Esophagus squamous epithelium (tissue), 5 donors: ENCODE measurements at regions of chr17 and their contacts with region 1.

Region 1: DNA sequence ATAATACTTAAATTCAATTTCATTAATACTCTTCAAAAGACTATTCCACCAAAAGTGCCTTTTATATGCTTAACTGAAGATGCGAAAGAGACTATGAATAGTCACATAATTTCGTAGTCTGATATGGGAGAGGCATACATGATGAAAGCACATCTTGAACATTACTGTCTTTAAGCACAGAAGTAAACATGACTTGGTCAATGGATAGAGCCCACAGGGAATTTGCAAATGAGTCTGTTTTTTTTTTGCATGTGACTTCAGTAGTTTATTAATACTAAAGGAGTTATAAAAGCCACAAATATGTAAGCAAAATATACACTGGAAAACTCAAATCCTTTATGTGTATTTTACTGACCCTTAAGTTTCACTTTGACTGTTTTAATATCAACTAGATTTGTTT is 15.9 kb downstream of the ADPRM start:
- DNase-seq: no peak
- H3K4me3 ChIP-seq: no peak overlapping the region
- H3K27ac ChIP-seq: no peak overlapping the region
- H3K4me1 ChIP-seq: no peaks in the 10 kb centered on the region
- H3K27me3 ChIP-seq: no peaks in the 10 kb centered on the region
- CTCF ChIP-seq: no peak
- POLR2A ChIP-seq: no peak

Region 2: GRCh38 chr17:10836966-10837590 is 123.8 kb after region 1 on chr17:
- intact Hi-C with region 1: no loop called
- DNase-seq: no peak
- H3K4me3 ChIP-seq: no peak overlapping the region
- H3K27ac ChIP-seq: no peak overlapping the region
- H3K4me1 ChIP-seq: no peaks in the 10 kb centered on the region
- H3K27me3 ChIP-seq: peaks cover 0 to 4% (median 0%) of the 10 kb centered on the region in 4 donors
- CTCF ChIP-seq: no peak
- POLR2A ChIP-seq: no peak

Region 3: GRCh38 chr17:11296994-11297393 is 583.7 kb after region 1 on chr17:
- intact Hi-C with region 1: loop called (anchors 5 kb)
- DNase-seq: no peak
- H3K4me3 ChIP-seq: no peak overlapping the region
- H3K27ac ChIP-seq: no peak overlapping the region
- H3K4me1 ChIP-seq: no peaks in the 10 kb centered on the region
- H3K27me3 ChIP-seq: no peaks in the 10 kb centered on the region
- CTCF ChIP-seq: peak in 4 of 6 experiments; percentile 33 to 55 (median 46)
- POLR2A ChIP-seq: no peak

Region 4: GRCh38 chr17:11318207-11318606 is 604.9 kb after region 1 on chr17:
- intact Hi-C with region 1: loop called (anchors 2 kb)
- DNase-seq: no peak
- H3K4me3 ChIP-seq: no peak overlapping the region
- H3K27ac ChIP-seq: no peak overlapping the region
- H3K4me1 ChIP-seq: no peaks in the 10 kb centered on the region
- H3K27me3 ChIP-seq: no peaks in the 10 kb centered on the region
- CTCF ChIP-seq: no peak
- POLR2A ChIP-seq: no peak